Keratinocyte (primary cell): ENCODE measurements at regions of chr10 and their contacts with region 1.

Region 1: DNA sequence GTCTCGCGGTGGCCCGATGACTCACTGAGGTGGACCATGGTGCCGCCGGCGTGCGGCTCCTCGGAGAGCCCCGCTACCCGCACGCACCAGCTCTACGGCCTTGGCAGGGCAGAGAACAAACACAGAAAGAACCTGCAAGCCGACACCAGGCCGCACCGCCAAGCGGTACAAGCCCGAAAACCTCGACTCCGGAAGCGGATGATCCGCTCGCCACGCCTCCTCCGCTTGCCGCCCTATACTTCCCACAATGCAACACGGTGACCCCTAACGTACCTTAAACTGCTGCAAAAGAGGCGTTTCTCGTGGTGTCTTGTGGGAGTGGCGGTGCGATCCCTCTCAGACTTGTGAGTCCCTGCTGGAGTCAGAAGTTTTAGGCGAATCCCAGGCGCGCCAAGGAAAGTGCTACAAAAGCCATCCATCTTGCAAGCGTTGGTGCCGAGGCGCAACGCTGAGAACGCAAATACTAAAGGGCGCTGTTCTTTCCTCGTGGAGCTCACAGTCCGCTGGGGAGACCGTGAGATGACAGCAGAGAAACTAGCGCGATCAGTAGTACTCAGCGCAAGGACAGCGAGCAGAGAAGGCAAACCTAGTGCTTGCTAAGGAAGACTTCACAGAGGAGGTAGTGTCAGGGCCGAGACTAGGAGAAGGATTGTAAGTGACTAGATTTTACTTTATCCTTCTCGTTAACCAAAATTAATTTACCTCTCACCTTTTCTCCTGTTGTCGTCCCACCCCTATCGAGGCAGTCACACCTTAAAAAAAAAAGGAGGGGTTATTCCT is at the start of gene MRPS16:
- DNase-seq: peak; percentile 91
- H3K4me3 ChIP-seq: peak within 1 kb of the TSS; percentile 68 to 89 (median 72)
- H3K27ac ChIP-seq: peak within 1 kb of the TSS; percentile 94
- H3K4me1 ChIP-seq: peaks cover 18% of the 10 kb centered on the region
- H3K27me3 ChIP-seq: no peaks in the 10 kb centered on the region
- CTCF ChIP-seq: no peak
- polyA plus RNA-seq, gene MRPS16: 79.2 to 95.4 TPM (median 79.9 TPM) in 3 replicates

Region 2: DNA sequence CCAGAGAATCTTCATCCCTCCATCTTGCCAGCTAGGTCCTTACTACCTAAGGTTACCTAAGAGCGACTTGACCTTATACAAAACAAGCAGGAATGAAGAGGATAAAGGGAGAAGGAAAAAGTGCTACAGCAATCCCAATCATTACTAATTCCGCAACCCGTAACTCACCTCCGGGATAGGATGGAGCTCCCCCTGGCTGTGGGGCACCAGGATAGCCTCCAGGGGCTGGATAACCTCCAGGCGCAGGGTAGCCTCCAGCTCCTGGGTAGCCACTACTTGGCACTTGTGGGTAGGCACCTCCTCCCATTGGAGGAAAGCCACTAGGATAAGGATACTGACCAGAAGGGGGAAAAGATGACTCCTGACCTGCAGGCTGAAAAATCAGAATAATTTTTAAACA is 145.4 kb after region 1 on chr10:
- dilution Hi-C with region 1: loop called (anchors 25 kb)
- DNase-seq: no peak
- H3K4me3 ChIP-seq: no peak overlapping the region
- H3K27ac ChIP-seq: no peak overlapping the region
- H3K4me1 ChIP-seq: no peaks in the 10 kb centered on the region
- H3K27me3 ChIP-seq: no peaks in the 10 kb centered on the region
- CTCF ChIP-seq: peak in 2 of 3 experiments; percentile 29 to 50